ENCODE measurements at regions of chr7 and their contacts with region 1.

Region 1: DNA sequence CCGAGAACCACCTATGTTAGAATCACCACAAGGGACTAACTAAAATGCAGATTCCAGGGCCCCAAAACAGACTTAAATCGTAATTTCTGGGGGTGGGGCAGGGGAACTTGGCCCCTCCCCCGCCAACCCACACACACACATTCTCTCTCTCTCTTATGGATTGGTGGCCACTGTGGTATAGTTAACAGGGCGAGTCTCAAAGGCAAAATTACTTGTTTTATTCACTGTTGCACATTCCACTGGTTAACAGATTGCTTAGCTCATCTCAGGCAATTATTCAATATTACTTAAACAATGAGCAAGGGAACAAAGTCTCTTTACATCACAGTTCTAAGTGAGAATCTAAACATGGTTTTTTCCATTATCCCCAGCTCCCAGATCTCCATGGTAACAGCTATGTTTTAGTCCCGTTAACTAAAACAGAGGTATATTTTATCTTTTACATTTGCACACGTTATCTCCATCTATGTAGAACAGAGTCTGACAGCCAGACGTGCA is 38.5 kb downstream of the IGF2BP3 start:
- DNase-seq: no peak
- H3K4me3 ChIP-seq: no peak overlapping the region
- H3K27ac ChIP-seq: peak overlapping the region in 1 of 2 experiments; percentile 61; a peak in 3 of 4 replicates
- H3K4me1 ChIP-seq: peaks cover 3 to 24% of the 10 kb centered on the region in 2 experiments; a peak in 3 of 4 replicates
- H3K27me3 ChIP-seq: no peaks in the 10 kb centered on the region
- CTCF ChIP-seq: no peak
- EP300 ChIP-seq: no peak
- RAD21 ChIP-seq: no peak

Region 2: GRCh38 chr7:23418046-23418445 is 13.7 kb before region 1 on chr7:
- CTCF ChIA-PET with region 1: interaction called, 39 read pairs
- POLR2A ChIA-PET with region 1: no interaction called
- DNase-seq: no peak
- H3K4me3 ChIP-seq: no peak overlapping the region
- H3K27ac ChIP-seq: peak overlapping the region in 1 of 2 experiments; percentile 4; a peak in 1 of 4 replicates
- H3K4me1 ChIP-seq: peaks cover 0 to 14% of the 10 kb centered on the region in 2 experiments; a peak in 3 of 4 replicates
- H3K27me3 ChIP-seq: no peaks in the 10 kb centered on the region
- CTCF ChIP-seq: no peak
- EP300 ChIP-seq: no peak
- RAD21 ChIP-seq: no peak

Region 3: GRCh38 chr7:23454881-23455506 is 23.2 kb after region 1 on chr7:
- CTCF ChIA-PET with region 1: interaction called, 13 read pairs
- POLR2A ChIA-PET with region 1: no interaction called
- DNase-seq: no peak
- H3K4me3 ChIP-seq: no peak overlapping the region
- H3K27ac ChIP-seq: no peak overlapping the region
- H3K4me1 ChIP-seq: peaks cover 0 to 2% of the 10 kb centered on the region in 2 experiments; a peak in 2 of 4 replicates
- H3K27me3 ChIP-seq: no peaks in the 10 kb centered on the region
- CTCF ChIP-seq: no peak
- EP300 ChIP-seq: no peak
- RAD21 ChIP-seq: no peak

Region 4: DNA sequence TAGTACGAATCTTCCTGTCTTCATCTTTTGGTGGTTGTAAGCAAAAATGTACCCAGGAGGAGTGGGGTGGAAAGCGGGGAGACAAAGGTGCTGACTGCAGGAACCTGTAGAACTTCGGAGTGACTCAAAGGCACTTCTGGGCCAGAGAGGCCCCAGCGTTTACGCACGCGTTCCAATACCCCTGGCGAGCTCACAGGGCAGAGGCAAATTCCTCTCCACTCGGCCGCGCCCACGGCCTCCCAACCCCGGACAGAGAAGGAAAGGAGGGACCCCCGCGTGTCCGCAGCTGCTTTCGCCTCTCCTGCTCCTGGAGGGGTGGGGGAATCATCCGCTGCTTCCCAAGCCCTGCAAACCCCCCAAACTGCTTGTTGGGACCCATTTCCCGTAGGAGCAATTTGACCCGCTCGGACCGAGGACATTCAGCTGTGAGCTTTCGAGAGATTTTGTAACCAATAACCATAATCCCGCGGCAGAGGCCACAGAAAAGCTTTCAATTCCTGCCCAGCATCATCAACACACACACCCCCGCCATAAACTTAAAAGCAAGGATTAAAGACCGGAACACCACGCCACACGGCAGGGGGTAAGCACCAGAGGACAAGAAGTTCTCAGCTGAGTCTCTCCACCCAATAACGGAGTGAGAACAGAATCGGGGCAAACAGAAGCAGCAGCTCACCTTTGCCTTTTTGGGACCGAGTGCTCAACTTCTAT is 36.2 kb after region 1 on chr7:
- CTCF ChIA-PET with region 1: interaction called, 14 read pairs
- POLR2A ChIA-PET with region 1: interaction called, 3 read pairs
- DNase-seq: peak; percentile 48
- H3K4me3 ChIP-seq: peak overlapping the region; percentile 88 to 89
- H3K27ac ChIP-seq: peak overlapping the region; percentile 93 to 96
- H3K4me1 ChIP-seq: peaks cover 29 to 44% of the 10 kb centered on the region in 2 experiments
- H3K27me3 ChIP-seq: no peaks in the 10 kb centered on the region
- CTCF ChIP-seq: no peak
- EP300 ChIP-seq: no peak
- RAD21 ChIP-seq: no peak